ENCODE measurements at regions of chr11 and their contacts with region 1.

Region 1: DNA sequence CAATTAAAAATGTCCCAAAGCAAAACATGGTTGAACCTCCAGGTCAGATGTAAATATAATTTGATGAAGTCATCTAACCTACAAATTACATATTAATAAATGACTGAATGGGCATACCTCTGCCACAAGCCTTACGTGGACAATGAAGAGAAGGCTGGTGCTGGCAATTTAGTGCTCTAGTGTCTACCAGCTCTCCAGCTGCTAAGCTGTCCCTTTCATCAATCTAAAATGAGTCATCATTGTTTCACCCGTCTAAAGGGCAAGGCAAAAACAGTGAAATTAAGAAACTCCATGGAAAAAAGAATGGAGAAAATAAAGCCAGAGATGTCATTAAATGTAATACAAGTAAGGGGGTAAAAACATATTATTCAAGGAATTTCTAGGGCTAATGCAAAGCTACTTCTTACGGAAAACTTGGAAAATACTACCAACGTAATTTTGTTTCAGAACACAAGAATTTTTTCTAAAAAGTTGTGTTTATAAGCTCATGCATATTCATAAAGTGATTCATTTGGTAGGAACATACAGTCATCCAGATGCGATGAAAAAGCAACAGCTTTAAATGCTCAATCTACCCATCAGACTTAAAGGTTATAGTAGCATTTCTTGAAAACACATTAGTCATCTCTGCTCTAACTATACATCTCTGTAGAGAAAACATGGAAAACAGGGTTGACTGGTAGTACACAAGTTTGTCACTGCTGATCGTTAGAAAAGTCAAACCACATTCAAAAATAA is 71.5 kb downstream of the SIK3 start:
- DNase-seq: no peak
- H3K4me3 ChIP-seq: no peak overlapping the region
- H3K27ac ChIP-seq: no peak overlapping the region
- H3K4me1 ChIP-seq: peaks cover 21 to 46% (median 41%) of the 10 kb centered on the region in 4 donors
- H3K27me3 ChIP-seq: no peaks in the 10 kb centered on the region
- CTCF ChIP-seq: no peak
- EP300 ChIP-seq: no peak
- POLR2A ChIP-seq: no peak

Region 2: DNA sequence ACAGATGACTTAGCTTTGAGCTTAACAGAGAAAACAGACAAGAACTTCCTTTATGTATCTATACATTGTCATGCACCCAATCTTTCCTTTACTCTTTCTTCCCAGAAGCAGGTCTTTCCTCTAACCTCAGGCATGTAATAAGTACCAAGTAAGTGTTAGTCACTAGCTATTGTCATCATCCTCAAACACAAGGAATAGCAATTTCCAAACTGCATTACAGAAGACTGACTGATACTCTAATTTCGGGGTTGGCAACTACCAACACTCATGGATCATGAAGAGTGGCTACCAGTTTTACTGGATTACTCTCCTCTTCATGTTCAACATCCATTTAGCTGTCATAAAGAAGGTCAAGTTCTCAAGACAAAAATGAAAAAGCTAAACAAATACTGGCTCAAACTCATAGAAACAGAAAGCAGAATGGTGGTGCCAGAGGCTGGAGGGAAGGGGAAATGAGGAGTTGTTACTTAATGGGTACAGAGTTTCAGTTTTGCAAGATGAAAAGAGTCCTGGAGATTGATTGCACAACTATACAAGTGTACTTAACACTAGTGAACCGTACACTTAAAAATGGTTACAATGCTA is 40.1 kb before region 1 on chr11:
- intact Hi-C with region 1: loop called (anchors 5 kb)
- DNase-seq: no peak
- H3K4me3 ChIP-seq: peak overlapping the region in 1 of 4 donors; percentile 34
- H3K27ac ChIP-seq: peak overlapping the region; percentile 2 to 64 (median 46)
- H3K4me1 ChIP-seq: peaks cover 44 to 87% (median 82%) of the 10 kb centered on the region in 4 donors
- H3K27me3 ChIP-seq: no peaks in the 10 kb centered on the region
- CTCF ChIP-seq: no peak
- EP300 ChIP-seq: no peak
- POLR2A ChIP-seq: no peak

Measured in esophagus muscularis mucosa (tissue), 4 donors.